A673 (cell line): ENCODE measurements at regions of chr12 and their contacts with region 1.

Region 1: GRCh38 chr12:43737646-43738045 is 20.9 kb downstream of the PUS7L start:
- DNase-seq: no peak
- H3K4me3 ChIP-seq: no peak overlapping the region
- H3K27ac ChIP-seq: no peak overlapping the region
- H3K4me1 ChIP-seq: no peaks in the 10 kb centered on the region
- H3K27me3 ChIP-seq: no peaks in the 10 kb centered on the region
- CTCF ChIP-seq: no peak

Region 2: DNA sequence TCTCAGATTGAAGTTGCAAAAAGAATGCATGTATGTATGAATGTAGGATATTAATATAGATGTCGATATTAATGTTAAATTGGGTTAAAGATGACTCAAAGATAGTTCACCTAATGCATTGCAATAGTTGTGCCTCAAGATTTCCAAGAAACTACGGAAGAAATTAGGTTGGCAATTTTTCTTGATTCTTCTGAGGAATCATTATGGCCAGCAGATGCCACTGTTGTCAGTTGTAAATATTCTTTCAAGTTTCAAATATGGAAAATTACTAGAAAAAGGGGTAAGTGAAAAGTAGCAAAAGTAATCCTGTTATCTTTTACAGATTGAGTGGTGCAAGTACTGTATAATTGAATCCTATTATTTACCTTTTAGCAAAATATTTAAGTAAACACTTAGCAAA is 387.8 kb before region 1 on chr12:
- CTCF ChIA-PET with region 1: no interaction called
- POLR2A ChIA-PET with region 1: no interaction called
- intact Hi-C with region 1: loop called (anchors 10 kb)
- DNase-seq: peak; percentile 12
- H3K4me3 ChIP-seq: no peak overlapping the region
- H3K27ac ChIP-seq: no peak overlapping the region
- H3K4me1 ChIP-seq: no peaks in the 10 kb centered on the region
- H3K27me3 ChIP-seq: no peaks in the 10 kb centered on the region
- CTCF ChIP-seq: peak; percentile 48

Region 3: GRCh38 chr12:43362910-43363694 is 374.5 kb before region 1 on chr12:
- CTCF ChIA-PET with region 1: interaction called, 12 read pairs
- POLR2A ChIA-PET with region 1: no interaction called
- intact Hi-C with region 1: loop called (anchors 10 kb)
- DNase-seq: no peak
- H3K4me3 ChIP-seq: no peak overlapping the region
- H3K27ac ChIP-seq: no peak overlapping the region
- H3K4me1 ChIP-seq: no peaks in the 10 kb centered on the region
- H3K27me3 ChIP-seq: no peaks in the 10 kb centered on the region
- CTCF ChIP-seq: no peak

Region 4: DNA sequence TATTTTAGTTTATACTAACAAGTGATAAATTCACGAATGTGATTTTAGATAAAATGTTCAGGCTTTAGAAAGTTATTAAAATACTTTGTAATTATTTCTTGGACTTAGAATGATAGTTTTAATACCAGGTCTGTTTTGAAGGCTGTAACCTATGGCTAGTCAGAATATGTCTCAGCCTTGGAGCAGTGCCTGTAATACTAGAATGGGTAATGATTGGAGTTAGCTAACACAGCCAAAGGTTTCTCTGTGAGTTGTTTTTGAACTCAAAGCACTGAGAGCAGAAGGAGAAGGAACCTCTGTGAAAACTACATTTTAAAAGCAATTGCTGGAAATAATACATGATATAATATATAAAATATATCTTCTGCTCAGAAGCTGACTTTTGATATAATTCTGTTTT is 208.3 kb after region 1 on chr12:
- CTCF ChIA-PET with region 1: no interaction called
- POLR2A ChIA-PET with region 1: no interaction called
- intact Hi-C with region 1: no loop called
- DNase-seq: no peak
- H3K4me3 ChIP-seq: no peak overlapping the region
- H3K27ac ChIP-seq: no peak overlapping the region
- H3K4me1 ChIP-seq: no peaks in the 10 kb centered on the region
- H3K27me3 ChIP-seq: no peaks in the 10 kb centered on the region
- CTCF ChIP-seq: no peak

Region 5: GRCh38 chr12:44253338-44253856 is 515.8 kb after region 1 on chr12:
- CTCF ChIA-PET with region 1: no interaction called
- POLR2A ChIA-PET with region 1: no interaction called
- intact Hi-C with region 1: no loop called
- DNase-seq: no peak
- H3K4me3 ChIP-seq: no peak overlapping the region
- H3K27ac ChIP-seq: no peak overlapping the region
- H3K4me1 ChIP-seq: no peaks in the 10 kb centered on the region
- H3K27me3 ChIP-seq: no peaks in the 10 kb centered on the region
- CTCF ChIP-seq: no peak